Endothelial cell of umbilical vein (primary cell): ENCODE measurements at regions of chr3 and their contacts with region 1.

Region 1: DNA sequence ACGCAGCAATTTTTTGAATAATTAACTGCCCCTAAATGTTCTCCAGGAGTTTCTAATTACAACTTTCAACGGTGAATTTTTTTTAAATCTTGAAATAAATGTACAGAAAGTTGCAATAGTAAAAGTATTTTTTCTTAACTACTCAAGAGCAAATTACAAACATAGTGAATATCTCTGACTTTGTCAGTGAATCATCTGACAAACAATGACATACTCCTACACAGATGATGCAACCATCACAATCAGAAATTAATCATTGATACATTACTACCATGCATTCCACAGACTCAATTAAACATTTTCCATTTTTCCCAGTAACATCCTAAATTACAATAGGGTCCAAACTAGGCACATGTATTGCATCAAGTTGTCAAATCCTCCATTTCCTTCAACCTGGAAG is 597.3 kb downstream of the NAALADL2 start:
- DNase-seq: no peak
- H3K4me3 ChIP-seq: no peak overlapping the region
- H3K27ac ChIP-seq: no peak overlapping the region
- H3K4me1 ChIP-seq: no peaks in the 10 kb centered on the region
- H3K27me3 ChIP-seq: no peaks in the 10 kb centered on the region
- CTCF ChIP-seq: no peak
- POLR2A ChIP-seq: no peak

Region 2: GRCh38 chr3:174413057-174413912 is 1043.2 kb before region 1 on chr3:
- CTCF ChIA-PET with region 1: no interaction called
- POLR2A ChIA-PET with region 1: no interaction called
- dilution Hi-C with region 1: no loop called
- intact Hi-C with region 1: loop called (anchors 5 kb)
- DNase-seq: no peak
- H3K4me3 ChIP-seq: no peak overlapping the region
- H3K27ac ChIP-seq: no peak overlapping the region
- H3K4me1 ChIP-seq: no peaks in the 10 kb centered on the region
- H3K27me3 ChIP-seq: no peaks in the 10 kb centered on the region
- CTCF ChIP-seq: no peak
- POLR2A ChIP-seq: no peak